CD4-positive, alpha-beta T cell (primary cell): ENCODE measurements at regions of chr17 and their contacts with region 1.

Region 1: DNA sequence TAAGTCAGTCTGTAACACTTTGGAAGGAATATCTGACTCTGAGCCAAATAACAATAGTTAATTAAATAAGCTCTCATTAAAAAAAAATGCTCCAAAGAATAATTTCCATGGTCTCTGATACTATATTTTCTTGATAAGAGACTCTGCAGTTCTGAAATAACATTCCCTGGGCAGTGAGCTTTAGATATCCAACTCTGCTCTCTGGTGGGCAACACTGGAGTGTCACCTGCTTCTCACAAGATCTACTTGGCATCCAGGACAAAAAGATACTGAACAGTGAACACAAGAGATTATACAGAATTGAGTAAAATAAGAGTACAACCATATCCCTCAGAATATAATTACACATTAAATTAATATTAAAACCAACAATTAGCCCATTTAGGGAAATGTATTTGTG is 13.7 kb downstream of the BLMH start:
- DNase-seq: peak in 3 of 14 experiments; percentile 12 to 43 (median 28)
- ATAC-seq: peak; percentile 52
- H3K4me3 ChIP-seq: no peak overlapping the region
- H3K4me3 Mint-ChIP-seq: no peak overlapping the region
- H3K27ac ChIP-seq: no peak overlapping the region
- H3K27ac Mint-ChIP-seq: no peak overlapping the region
- H3K4me1 ChIP-seq: no peaks in the 10 kb centered on the region
- H3K4me1 Mint-ChIP-seq: no peaks in the 10 kb centered on the region
- H3K27me3 ChIP-seq: no peaks in the 10 kb centered on the region
- H3K27me3 Mint-ChIP-seq: no peaks in the 10 kb centered on the region
- CTCF ChIP-seq: peak; percentile 19

Region 2: GRCh38 chr17:30134551-30134950 is 143.5 kb before region 1 on chr17:
- CTCF ChIA-PET with region 1: no interaction called
- POLR2A ChIA-PET with region 1: no interaction called
- intact Hi-C with region 1: loop called in 1 of 2 experiments (anchors 5 kb)
- DNase-seq: no peak
- ATAC-seq: no peak
- H3K4me3 ChIP-seq: no peak overlapping the region
- H3K4me3 Mint-ChIP-seq: no peak overlapping the region
- H3K27ac ChIP-seq: no peak overlapping the region
- H3K27ac Mint-ChIP-seq: no peak overlapping the region
- H3K4me1 ChIP-seq: no peaks in the 10 kb centered on the region
- H3K4me1 Mint-ChIP-seq: peaks cover 60% of the 10 kb centered on the region
- H3K27me3 ChIP-seq: no peaks in the 10 kb centered on the region
- H3K27me3 Mint-ChIP-seq: no peaks in the 10 kb centered on the region
- CTCF ChIP-seq: no peak

Region 3: DNA sequence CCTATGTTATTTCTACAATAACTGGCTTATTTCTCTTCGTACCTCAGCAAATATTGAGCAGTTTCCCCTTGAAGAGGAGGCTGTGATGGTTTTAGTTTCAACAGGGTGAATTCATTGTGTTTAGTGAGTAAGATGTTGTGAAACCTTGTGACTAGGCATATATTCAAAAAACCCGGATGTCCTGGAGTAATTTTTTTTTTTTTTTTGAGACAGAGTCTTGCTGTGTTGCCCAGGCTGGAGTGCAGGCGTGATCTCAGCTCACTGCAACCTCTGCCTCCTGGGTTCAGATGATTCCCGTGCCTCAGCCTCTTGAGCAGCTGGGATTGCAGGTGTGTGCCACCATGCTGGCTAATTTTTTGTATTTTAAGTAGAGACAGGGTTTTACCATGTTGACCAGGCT is 111.8 kb after region 1 on chr17:
- CTCF ChIA-PET with region 1: no interaction called
- POLR2A ChIA-PET with region 1: no interaction called
- intact Hi-C with region 1: no loop called
- DNase-seq: peak in 1 of 14 experiments; percentile 21
- ATAC-seq: no peak
- H3K4me3 ChIP-seq: no peak overlapping the region
- H3K4me3 Mint-ChIP-seq: no peak overlapping the region
- H3K27ac ChIP-seq: no peak overlapping the region
- H3K27ac Mint-ChIP-seq: no peak overlapping the region
- H3K4me1 ChIP-seq: no peaks in the 10 kb centered on the region
- H3K4me1 Mint-ChIP-seq: peaks cover 13% of the 10 kb centered on the region
- H3K27me3 ChIP-seq: no peaks in the 10 kb centered on the region
- H3K27me3 Mint-ChIP-seq: no peaks in the 10 kb centered on the region
- CTCF ChIP-seq: no peak